Posterior vena cava (tissue), 2 donors: ENCODE measurements at regions of chr18 and their contacts with region 1.

Region 1: GRCh38 chr18:44386401-44386800 is 294.3 kb upstream of the SETBP1 start:
- DNase-seq: no peak

Region 2: GRCh38 chr18:44331656-44332570 is 54.5 kb before region 1 on chr18:
- intact Hi-C with region 1: loop called in 1 of 2 experiments (anchors 2 kb)
- DNase-seq: no peak